Calu3 (cell line): ENCODE measurements at regions of chr1 and their contacts with region 1.

Region 1: GRCh38 chr1:224080115-224080774 is 33.7 kb upstream of the FBXO28 start:
- DNase-seq: peak; percentile 69
- H3K4me3 Mint-ChIP-seq: peak overlapping the region; percentile 48
- H3K27ac Mint-ChIP-seq: peak overlapping the region; percentile 99
- H3K4me1 Mint-ChIP-seq: peaks cover 58% of the 10 kb centered on the region
- H3K27me3 Mint-ChIP-seq: no peaks in the 10 kb centered on the region
- CTCF ChIP-seq: no peak

Region 2: DNA sequence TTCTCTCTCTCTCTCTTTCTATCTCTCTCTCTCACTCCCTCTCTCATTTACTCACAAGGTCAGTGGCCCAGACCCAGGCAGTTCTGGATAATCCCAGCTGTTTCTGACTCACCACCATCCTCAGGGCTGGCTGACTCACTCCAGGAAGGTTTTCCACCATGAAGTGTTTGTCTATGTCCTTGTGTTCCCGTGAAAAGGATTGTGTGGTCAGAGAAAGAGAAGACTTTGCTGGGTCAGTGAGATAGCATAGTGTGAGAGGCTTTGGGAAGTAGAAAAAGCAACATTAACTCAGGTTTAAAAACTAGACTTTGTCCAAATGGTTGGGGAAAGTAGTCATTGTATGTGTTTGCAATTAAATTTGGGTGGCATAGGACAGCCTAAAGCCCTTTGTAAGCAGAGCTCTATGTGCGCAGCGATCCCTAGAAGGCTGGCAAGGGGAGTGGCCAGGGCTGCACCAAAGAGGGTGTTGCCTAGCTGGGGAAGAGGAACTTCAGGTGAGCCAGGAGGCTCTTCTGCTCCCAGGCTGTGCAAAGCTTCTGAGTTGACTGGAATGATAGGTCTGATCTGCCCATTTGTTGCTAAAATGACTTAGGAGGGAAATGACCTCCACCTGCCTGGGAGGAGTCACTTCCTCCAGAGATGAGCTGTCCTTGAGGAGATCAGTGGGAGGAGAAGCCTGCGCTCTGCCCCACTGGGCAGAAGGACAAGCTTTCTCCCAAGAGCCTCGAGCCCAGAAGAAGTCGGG is 372.8 kb before region 1 on chr1:
- CTCF ChIA-PET with region 1: no interaction called
- intact Hi-C with region 1: loop called (anchors 10 kb)
- DNase-seq: peak; percentile 83
- H3K4me3 Mint-ChIP-seq: peak overlapping the region; percentile 43
- H3K27ac Mint-ChIP-seq: peak overlapping the region; percentile 90
- H3K4me1 Mint-ChIP-seq: peaks cover 67% of the 10 kb centered on the region
- H3K27me3 Mint-ChIP-seq: no peaks in the 10 kb centered on the region
- CTCF ChIP-seq: no peak

Region 3: DNA sequence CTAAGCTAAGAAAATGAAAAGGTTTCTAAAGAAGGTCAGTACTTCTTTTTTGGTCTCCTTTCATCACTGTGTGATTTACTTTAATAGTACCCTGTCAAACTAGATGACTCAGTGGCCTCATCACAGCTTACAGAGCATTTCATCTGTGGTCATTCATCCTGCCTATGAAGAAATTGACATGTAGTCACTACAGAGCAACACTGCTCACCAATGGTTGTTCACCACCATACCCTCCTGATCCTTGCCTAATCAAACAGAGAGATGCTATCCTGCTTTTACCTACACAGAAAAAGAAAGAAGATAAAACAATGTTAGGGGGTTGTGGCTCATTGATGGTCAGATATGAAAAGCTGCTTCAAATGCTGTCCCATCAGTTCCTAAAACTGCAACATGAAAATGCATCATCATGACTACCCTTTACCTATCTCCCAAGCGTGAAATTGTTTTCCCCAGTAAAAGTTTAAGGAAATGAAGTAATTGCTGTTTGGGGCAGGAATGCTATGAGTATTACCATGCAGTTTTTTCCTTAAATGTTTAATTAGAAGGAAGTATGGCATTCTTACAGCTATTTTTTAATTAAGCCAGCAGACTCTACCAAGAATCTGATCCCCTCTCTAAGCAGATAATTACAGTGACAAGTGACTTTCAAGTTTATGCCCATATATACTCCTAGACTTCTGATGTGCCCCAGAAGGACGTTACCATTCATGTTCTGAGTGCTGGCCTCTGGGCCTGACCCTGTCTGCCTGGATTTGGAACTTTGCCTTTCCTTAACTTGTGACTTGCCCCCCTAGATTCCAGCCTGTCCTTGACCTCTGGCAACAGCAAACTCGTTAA is 12.4 kb before region 1 on chr1:
- CTCF ChIA-PET with region 1: interaction called, 8 read pairs
- intact Hi-C with region 1: loop called (anchors 1 kb)
- DNase-seq: no peak
- H3K4me3 Mint-ChIP-seq: no peak overlapping the region
- H3K27ac Mint-ChIP-seq: peak overlapping the region; percentile 95
- H3K4me1 Mint-ChIP-seq: peaks cover 53% of the 10 kb centered on the region
- H3K27me3 Mint-ChIP-seq: no peaks in the 10 kb centered on the region
- CTCF ChIP-seq: no peak